ENCODE measurements at regions of chr15 and their contacts with region 1.

Region 1: GRCh38 chr15:27965546-27965945 is 133.6 kb downstream of the OCA2 start:
- DNase-seq: no peak
- ATAC-seq: no peak
- H3K4me3 ChIP-seq: no peak overlapping the region
- H3K4me3 Mint-ChIP-seq: no peak overlapping the region
- H3K27ac ChIP-seq: no peak overlapping the region
- H3K27ac Mint-ChIP-seq: no peak overlapping the region
- H3K4me1 ChIP-seq: no peaks in the 10 kb centered on the region
- H3K4me1 Mint-ChIP-seq: no peaks in the 10 kb centered on the region
- H3K27me3 ChIP-seq: no peaks in the 10 kb centered on the region
- H3K27me3 Mint-ChIP-seq: no peaks in the 10 kb centered on the region
- CTCF ChIP-seq: no peak

Region 2: DNA sequence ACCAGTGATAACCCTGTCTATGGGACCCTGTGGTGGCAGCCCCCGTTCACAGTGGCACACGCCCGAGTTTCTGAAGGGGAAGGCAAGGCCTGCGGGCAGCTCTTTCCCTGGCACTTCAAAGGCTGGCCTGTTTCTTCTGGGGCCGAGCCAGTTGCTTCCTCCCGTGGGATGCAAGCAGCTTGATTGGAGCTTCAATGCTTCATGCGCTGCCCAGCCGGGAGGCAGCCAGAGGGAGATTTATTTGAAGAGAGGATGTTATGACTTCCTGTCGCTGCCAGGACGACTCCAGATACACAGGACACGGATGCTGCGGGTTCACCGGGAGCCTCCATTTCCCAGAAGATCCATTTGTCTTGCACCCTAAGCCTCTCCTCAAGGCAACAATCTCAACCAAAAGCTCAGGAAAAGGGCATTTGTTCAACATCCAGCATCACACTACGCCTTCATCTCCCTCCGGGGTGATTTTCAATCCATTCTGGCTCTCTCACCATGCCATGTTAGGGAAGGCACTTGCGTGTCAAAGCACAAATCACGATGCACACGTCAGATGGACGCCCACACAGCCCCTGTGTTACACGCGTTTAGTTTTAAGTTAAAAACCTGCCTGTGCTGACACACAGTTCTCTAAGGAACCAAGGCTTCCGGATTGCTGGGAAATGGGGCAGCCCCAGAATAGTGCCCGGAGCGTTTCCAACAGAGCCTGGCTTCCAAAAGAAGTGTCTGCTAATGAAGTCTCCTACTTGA is 196.6 kb before region 1 on chr15:
- CTCF ChIA-PET with region 1: no interaction called
- POLR2A ChIA-PET with region 1: no interaction called
- intact Hi-C with region 1: no loop called
- DNase-seq: no peak
- ATAC-seq: no peak
- H3K4me3 ChIP-seq: no peak overlapping the region
- H3K4me3 Mint-ChIP-seq: no peak overlapping the region
- H3K27ac ChIP-seq: no peak overlapping the region
- H3K27ac Mint-ChIP-seq: no peak overlapping the region
- H3K4me1 ChIP-seq: no peaks in the 10 kb centered on the region
- H3K4me1 Mint-ChIP-seq: no peaks in the 10 kb centered on the region
- H3K27me3 ChIP-seq: no peaks in the 10 kb centered on the region
- H3K27me3 Mint-ChIP-seq: no peaks in the 10 kb centered on the region
- CTCF ChIP-seq: no peak

Region 3: DNA sequence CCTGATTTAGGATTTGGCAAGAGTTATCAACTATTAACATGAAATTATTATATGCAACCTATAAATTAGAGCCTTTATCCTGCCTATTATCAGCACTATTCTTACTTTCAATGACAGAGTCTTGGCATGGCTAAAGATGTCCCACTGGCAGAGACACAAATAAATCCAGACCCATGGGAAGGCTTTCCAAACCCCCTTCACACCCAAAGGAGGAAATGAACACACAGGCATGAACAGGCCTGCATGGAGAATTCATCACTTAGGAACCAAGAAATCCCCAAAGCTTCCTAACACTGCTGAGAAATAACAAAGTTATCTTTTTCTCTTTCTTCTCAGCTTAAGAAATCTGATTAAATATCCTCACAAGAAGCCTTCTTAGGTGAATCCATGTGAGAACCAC is 80.3 kb before region 1 on chr15:
- CTCF ChIA-PET with region 1: no interaction called
- POLR2A ChIA-PET with region 1: no interaction called
- intact Hi-C with region 1: no loop called
- DNase-seq: no peak
- ATAC-seq: no peak
- H3K4me3 ChIP-seq: no peak overlapping the region
- H3K4me3 Mint-ChIP-seq: no peak overlapping the region
- H3K27ac ChIP-seq: no peak overlapping the region
- H3K27ac Mint-ChIP-seq: no peak overlapping the region
- H3K4me1 ChIP-seq: no peaks in the 10 kb centered on the region
- H3K4me1 Mint-ChIP-seq: no peaks in the 10 kb centered on the region
- H3K27me3 ChIP-seq: no peaks in the 10 kb centered on the region
- H3K27me3 Mint-ChIP-seq: peaks cover 4% of the 10 kb centered on the region
- CTCF ChIP-seq: no peak

Region 4: DNA sequence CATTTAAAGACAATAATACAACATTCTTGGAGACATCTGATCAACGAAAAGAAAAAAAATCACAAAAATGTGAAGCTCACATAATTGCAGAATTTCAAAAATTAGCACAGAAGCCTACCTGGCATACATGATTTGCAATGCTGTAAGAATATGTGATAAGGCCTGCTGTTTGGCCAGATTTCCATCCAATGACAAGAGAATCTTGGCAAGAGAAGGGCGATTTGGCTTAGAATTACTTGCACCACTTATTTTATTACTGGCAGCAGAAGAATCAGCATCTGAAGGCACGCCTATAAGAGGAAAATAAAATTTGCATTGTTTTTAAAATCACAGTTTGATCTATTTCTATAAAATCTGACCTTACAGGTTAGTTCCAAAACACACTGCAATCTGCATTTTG is 203.8 kb after region 1 on chr15:
- CTCF ChIA-PET with region 1: no interaction called
- POLR2A ChIA-PET with region 1: no interaction called
- intact Hi-C with region 1: loop called in 1 of 2 experiments (anchors 5 kb)
- DNase-seq: no peak
- ATAC-seq: no peak
- H3K4me3 ChIP-seq: no peak overlapping the region
- H3K4me3 Mint-ChIP-seq: no peak overlapping the region
- H3K27ac ChIP-seq: no peak overlapping the region
- H3K27ac Mint-ChIP-seq: no peak overlapping the region
- H3K4me1 ChIP-seq: peaks cover 4% of the 10 kb centered on the region
- H3K4me1 Mint-ChIP-seq: no peaks in the 10 kb centered on the region
- H3K27me3 ChIP-seq: no peaks in the 10 kb centered on the region
- H3K27me3 Mint-ChIP-seq: no peaks in the 10 kb centered on the region
- CTCF ChIP-seq: no peak